Activated CD4-positive, alpha-beta memory T cell treated with anti-CD3 and anti-CD28 coated beads, Interleukin-2, amount 10 ng/mL, durations not matched to agents 7 days and 5 days (primary cell): ENCODE measurements at regions of chr19 and their contacts with region 1.

Region 1: GRCh38 chr19:13150187-13150930 is at the starts of genes IER2 and STX10:
- DNase-seq: peak; percentile 94
- H3K4me3 Mint-ChIP-seq: peak within 1 kb of the TSS; percentile 95
- H3K27ac Mint-ChIP-seq: peak within 1 kb of the TSS; percentile 99
- H3K4me1 Mint-ChIP-seq: peaks cover 24% of the 10 kb centered on the region
- H3K27me3 Mint-ChIP-seq: no peaks in the 10 kb centered on the region
- total RNA-seq, gene IER2: 231 to 234 TPM
- total RNA-seq, gene STX10: 69.0 to 72.2 TPM

Region 2: DNA sequence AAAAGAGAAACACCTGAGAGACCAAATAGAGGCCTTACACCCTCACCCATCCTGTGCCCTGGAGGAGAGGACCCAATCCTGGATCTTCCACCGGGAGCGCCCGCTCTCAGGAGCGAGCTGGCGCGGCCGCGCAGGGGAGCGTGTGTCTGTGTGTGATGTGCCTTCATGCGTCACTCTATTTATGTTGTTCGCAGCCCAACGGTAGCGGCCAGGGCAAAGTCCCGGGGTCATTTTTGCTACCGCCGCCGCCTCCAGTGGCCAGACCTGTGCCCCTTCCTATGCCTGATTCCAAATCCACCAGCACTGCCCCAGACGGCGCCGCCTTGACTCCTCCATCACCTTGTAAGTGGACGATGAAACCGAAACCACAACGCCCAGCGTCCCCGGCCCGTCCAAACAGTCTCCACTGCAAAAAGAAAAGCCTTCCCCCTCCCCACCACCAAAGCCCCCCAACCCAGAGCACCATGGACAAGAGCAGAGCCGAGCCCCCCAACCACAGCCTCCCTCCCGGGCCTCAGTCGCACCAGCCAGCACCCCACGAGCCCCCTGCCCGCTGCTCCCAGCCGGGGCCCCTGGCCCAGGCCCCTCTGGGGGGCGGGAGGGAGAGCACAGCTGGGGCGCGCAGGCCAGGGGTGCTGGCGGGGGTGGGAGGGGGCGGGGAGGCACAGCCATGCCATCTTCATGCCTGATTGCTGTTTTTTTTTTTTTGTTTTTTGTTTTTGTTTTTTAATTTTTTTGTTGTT is 62.4 kb before region 1 on chr19:
- CTCF ChIA-PET with region 1: no interaction called
- POLR2A ChIA-PET with region 1: no interaction called
- DNase-seq: no peak
- H3K4me3 Mint-ChIP-seq: no peak overlapping the region
- H3K27ac Mint-ChIP-seq: no peak overlapping the region
- H3K4me1 Mint-ChIP-seq: no peaks in the 10 kb centered on the region
- H3K27me3 Mint-ChIP-seq: peaks cover 9% of the 10 kb centered on the region

Region 3: DNA sequence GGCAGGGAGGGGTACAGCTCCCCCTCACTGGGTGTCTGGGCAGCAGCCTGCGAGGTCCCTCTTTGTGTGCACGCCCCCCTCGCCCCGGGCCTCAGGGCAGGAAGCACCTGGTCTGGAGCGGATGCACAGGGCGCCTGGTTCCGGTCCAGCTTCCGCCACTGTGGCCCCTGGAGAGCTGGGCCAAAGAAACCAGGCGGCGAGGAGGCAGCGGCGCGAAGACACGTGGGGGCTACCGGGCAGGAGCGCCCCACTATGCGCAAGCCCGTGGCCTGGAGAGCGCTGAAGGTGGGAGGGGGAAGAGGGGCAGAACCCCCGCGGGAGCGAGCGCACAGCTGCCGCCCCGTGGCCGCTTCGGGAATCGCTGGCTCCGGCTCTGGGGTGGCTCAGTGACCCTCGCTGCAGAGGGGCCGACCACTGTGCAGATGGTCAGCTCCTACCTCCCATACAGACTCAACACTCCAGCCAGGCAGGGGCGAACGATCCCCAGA is 46.0 kb before region 1 on chr19:
- CTCF ChIA-PET with region 1: interaction called, 12 read pairs
- POLR2A ChIA-PET with region 1: interaction called, 21 read pairs
- DNase-seq: peak; percentile 70
- H3K4me3 Mint-ChIP-seq: peak overlapping the region; percentile 90
- H3K27ac Mint-ChIP-seq: peak overlapping the region; percentile 89
- H3K4me1 Mint-ChIP-seq: peaks cover 45% of the 10 kb centered on the region
- H3K27me3 Mint-ChIP-seq: no peaks in the 10 kb centered on the region

Region 4: DNA sequence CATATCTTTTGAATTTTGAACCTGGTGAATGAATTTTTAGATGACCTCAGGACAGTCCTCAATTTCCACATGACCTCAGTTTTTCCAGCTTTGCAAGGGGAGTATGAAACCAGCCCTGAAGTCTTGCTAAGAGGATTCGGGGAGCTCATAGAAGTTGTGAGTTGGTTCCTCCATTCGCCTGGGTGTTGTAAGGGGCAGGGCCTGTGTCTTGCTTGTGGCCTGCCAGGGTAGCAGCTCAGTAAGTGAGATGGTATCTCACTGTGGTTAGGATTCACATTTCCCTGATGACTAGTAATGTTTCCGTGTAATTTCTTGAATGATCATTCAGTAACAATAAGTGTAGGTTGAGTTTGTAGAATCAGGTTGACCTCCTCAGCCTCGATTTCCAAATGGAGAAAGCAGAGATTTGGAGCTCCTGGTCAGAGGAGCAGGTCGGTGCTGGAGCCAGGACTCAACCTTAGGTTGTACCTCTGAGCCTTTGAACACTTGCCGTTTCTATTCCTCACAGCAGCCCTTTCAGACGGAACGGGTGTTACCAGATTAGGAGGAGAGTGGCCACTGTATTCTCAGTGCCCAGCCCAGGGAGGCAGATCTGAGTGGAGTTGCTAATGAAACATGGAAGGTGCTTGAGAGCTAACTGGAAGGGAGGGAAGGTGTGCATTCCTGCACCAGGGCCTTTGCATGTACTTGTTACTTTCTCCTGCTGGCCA is 17.7 kb before region 1 on chr19:
- CTCF ChIA-PET with region 1: interaction called, 13 read pairs
- POLR2A ChIA-PET with region 1: interaction called, 42 read pairs
- DNase-seq: peak; percentile 78
- H3K4me3 Mint-ChIP-seq: peak overlapping the region; percentile 61
- H3K27ac Mint-ChIP-seq: peak overlapping the region; percentile 91
- H3K4me1 Mint-ChIP-seq: peaks cover 45% of the 10 kb centered on the region
- H3K27me3 Mint-ChIP-seq: no peaks in the 10 kb centered on the region

Region 5: DNA sequence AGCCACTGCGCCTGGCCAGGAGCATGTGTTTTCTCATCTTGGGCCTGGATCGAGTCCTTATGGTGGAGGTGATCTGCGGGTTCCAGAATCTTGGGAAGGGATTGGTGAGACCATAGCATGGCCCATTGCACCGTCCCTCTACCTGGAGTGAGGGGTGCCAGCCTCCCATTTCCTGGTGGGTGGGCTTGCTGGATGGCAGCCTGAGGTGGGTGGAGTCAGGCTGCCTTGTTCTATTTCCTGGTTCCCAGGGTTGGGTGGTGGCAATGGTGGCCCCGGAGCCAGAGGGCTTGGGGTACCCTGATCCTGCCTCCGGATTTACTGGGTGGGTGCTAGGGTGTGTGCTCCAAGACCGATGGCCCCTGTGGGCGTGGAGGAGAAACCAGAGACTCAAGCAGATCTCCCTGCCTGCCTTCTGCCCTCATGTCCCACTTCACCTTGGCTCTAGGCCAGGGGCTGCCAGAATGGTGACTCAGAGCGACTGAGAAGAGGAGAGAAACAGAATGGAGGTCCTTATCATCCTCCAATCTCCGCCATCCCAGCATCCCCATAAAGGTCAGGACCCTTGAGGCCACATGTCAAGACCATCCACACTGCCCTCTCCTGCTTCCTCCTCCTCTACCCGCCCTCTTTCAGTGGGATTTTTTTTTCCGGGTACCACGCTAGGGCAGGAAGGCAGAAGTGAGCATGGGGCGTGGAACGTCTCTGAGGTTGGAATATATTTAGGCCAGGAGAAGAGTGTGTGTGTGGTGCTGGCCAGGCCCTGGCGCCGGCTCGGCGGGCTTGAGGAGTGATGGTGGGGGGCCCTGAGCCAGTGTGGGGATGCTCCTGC is 21.9 kb after region 1 on chr19:
- CTCF ChIA-PET with region 1: interaction called, 29 read pairs
- POLR2A ChIA-PET with region 1: interaction called, 335 read pairs
- DNase-seq: peak; percentile 71
- H3K4me3 Mint-ChIP-seq: peak overlapping the region; percentile 78
- H3K27ac Mint-ChIP-seq: peak overlapping the region; percentile 90
- H3K4me1 Mint-ChIP-seq: peaks cover 61% of the 10 kb centered on the region
- H3K27me3 Mint-ChIP-seq: no peaks in the 10 kb centered on the region

Region 6: GRCh38 chr19:13195678-13196077 is 45.3 kb after region 1 on chr19:
- CTCF ChIA-PET with region 1: interaction called, 36 read pairs
- POLR2A ChIA-PET with region 1: interaction called, 26 read pairs
- DNase-seq: peak; percentile 71
- H3K4me3 Mint-ChIP-seq: no peak overlapping the region
- H3K27ac Mint-ChIP-seq: no peak overlapping the region
- H3K4me1 Mint-ChIP-seq: peaks cover 29% of the 10 kb centered on the region
- H3K27me3 Mint-ChIP-seq: no peaks in the 10 kb centered on the region